AG04449 (cell line): ENCODE measurements at regions of chr16 and their contacts with region 1.

Region 1: GRCh38 chr16:84952335-84953189 is 58.8 kb downstream of the ZDHHC7 start:
- DNase-seq: no peak
- H3K4me3 ChIP-seq: no peak overlapping the region
- CTCF ChIP-seq: peak; percentile 86

Region 2: DNA sequence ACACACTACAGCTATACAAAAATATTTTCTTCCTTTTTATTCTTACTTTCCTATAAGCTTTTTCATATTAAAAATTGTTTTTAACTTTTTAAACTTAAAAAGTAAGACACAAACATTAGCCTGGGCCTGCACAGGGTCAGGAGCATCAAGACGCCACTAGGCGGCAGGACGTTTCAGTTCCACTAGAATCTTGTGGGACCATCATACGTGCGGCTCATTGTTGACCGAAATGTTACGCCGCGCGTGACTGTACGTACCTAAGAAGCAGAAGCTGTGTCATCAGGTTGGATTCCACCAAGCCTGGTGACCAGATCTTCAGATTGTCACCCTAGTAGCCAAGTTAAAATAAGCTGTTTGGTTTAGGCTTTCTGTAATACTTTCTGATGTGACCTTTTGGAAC is 205.7 kb before region 1 on chr16:
- CTCF ChIA-PET with region 1: interaction called, 492 read pairs
- POLR2A ChIA-PET with region 1: no interaction called
- DNase-seq: no peak
- H3K4me3 ChIP-seq: no peak overlapping the region
- CTCF ChIP-seq: peak; percentile 18

Region 3: GRCh38 chr16:84788920-84789391 is 163.6 kb before region 1 on chr16:
- CTCF ChIA-PET with region 1: interaction called, 12 read pairs
- POLR2A ChIA-PET with region 1: no interaction called
- DNase-seq: no peak
- H3K4me3 ChIP-seq: no peak overlapping the region
- CTCF ChIP-seq: no peak

Region 4: GRCh38 chr16:84933774-84934631 is 18.6 kb before region 1 on chr16:
- CTCF ChIA-PET with region 1: interaction called, 53 read pairs
- POLR2A ChIA-PET with region 1: no interaction called
- DNase-seq: no peak
- H3K4me3 ChIP-seq: no peak overlapping the region
- CTCF ChIP-seq: no peak

Region 5: DNA sequence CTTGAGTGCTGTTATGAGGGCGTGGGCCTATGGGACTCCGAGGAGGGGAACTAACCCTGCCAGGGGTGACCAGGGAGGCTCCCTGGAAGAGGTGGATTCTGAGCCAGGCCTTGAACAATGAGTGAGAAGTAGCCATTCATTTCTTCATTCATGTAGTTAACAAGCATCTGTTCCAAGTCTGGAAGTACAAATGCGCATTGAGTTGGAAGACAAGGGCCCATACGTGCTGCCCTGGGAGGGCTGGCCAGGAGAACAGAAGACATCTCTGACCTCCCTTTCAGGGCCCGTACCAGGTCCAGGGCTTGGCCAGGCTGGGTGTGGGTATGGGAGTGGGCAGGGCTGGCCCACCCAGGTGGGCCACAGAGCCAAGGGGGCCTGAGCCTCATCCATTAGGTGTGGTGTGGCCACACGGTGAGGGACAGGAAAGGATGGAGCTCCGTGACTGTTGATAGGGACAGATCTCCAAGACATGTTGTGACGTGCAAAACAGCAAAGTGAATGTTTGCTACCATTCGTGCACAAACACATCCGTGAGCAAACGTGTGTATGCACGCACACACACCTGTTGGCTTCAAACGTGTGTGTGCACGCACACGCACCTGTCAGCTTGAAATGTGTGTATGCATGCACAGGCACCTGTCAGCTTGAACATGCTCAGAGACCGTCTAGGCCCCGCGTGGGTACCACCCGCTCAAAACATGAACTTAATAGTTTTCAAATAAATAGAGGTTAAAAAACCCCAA is 12.0 kb after region 1 on chr16:
- CTCF ChIA-PET with region 1: interaction called, 184 read pairs
- POLR2A ChIA-PET with region 1: no interaction called
- DNase-seq: no peak
- H3K4me3 ChIP-seq: no peak overlapping the region
- CTCF ChIP-seq: no peak

Region 6: GRCh38 chr16:85187002-85187401 is 234.4 kb after region 1 on chr16:
- CTCF ChIA-PET with region 1: no interaction called
- POLR2A ChIA-PET with region 1: no interaction called
- DNase-seq: no peak
- H3K4me3 ChIP-seq: no peak overlapping the region
- CTCF ChIP-seq: no peak